Ovary (tissue), 10 donors: ENCODE measurements at regions of chr4 and their contacts with region 1.

Region 1: DNA sequence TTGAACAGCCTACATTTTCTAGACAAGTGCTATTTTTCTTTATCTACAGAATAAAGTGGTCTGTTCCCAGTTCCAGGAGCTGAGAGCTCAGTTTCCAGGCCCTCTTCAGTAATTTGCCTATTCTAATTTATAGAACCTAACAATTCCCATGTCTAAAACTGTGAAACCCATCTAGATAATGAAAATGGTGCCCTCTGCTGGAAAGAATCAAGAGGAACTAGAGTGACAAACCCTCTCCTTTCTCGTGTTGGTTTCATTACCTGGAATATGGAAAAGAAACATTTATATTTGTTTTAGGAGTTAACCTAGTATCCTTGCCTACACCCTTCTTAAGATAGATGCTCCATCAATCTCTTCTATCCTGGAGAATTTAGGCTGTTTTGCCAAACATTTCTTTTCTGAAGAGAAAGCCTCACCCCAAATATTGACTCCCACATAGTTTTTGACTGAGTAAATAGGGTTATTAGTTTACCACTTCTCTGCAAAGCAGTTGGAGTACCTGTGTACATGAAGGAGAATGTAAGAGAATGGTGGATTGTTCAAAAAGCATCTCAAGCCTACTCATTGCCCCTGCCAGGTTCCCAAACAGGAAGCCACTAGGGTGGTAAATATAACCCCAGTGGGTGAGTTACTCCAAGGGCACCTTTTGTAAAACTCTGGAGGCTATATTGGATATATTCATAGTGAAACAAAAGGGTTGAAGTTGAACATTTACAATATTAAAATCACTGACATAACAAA is 121.6 kb downstream of the RASL11B start:
- DNase-seq: no peak
- H3K4me3 ChIP-seq: no peak overlapping the region
- H3K27ac ChIP-seq: peak overlapping the region; percentile 10 to 41
- H3K4me1 ChIP-seq: peaks cover 13% of the 10 kb centered on the region
- H3K27me3 ChIP-seq: no peaks in the 10 kb centered on the region
- CTCF ChIP-seq: peak; percentile 21 to 63 (median 58)
- EP300 ChIP-seq: no peak
- POLR2A ChIP-seq: no peak

Region 2: DNA sequence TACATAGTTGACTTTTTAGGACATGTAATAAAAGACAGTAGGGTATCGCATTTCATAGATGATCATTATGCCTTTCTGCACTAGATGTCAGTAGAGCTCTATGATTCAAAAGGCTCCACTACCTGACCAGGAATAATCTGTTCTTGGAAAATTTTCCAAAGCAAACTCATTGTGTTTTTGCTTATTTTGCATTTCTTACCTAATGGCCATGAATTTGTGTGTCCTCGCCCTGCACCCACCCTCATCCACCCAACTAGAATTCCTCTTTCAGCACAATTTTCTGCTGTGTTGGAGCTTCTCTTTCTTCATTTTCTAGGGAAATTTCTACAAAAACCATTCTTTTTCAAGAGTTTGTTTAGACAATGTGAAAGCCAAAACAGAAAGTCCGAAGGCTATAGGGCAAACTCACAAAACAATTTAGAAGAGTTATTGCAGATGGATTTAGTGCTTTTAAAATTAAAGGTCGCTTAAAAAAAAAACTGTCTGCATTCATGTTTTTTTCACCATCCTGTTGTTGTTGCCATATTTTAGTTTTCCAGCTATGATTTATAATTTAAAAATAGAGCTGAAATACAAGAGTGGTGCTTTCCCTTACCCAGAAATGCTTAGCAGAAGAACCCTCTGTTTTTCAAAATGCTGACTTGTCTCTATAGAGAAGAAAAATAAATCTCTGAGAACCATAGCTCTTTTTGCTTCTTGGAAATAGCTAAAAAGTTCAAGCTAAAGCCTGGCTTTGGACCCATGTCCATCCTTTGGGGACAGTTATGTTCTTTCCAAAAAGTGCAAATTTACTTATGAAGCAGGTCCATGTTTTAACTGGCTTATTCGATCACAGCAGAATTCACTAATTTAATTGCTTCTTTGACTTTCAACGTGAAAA is 748.9 kb before region 1 on chr4:
- intact Hi-C with region 1: loop called in 2 of 4 experiments (anchors 5 to 10 kb)
- DNase-seq: peak; percentile 50 to 71 (median 62)
- H3K4me3 ChIP-seq: peak overlapping the region; percentile 15
- H3K27ac ChIP-seq: peak overlapping the region in 1 of 2 donors; percentile 29
- H3K4me1 ChIP-seq: no peaks in the 10 kb centered on the region
- H3K27me3 ChIP-seq: no peaks in the 10 kb centered on the region
- CTCF ChIP-seq: peak; percentile 32 to 71 (median 71)
- EP300 ChIP-seq: no peak
- POLR2A ChIP-seq: no peak

Region 3: GRCh38 chr4:52376132-52376704 is 607.5 kb before region 1 on chr4:
- intact Hi-C with region 1: loop called in 2 of 4 experiments (anchors 5 to 10 kb)
- DNase-seq: peak in 3 of 5 donors; percentile 17 to 43 (median 32)
- H3K4me3 ChIP-seq: no peak overlapping the region
- H3K27ac ChIP-seq: no peak overlapping the region
- H3K4me1 ChIP-seq: no peaks in the 10 kb centered on the region
- H3K27me3 ChIP-seq: no peaks in the 10 kb centered on the region
- CTCF ChIP-seq: peak; percentile 32 to 67 (median 56)
- EP300 ChIP-seq: no peak
- POLR2A ChIP-seq: no peak

Region 4: DNA sequence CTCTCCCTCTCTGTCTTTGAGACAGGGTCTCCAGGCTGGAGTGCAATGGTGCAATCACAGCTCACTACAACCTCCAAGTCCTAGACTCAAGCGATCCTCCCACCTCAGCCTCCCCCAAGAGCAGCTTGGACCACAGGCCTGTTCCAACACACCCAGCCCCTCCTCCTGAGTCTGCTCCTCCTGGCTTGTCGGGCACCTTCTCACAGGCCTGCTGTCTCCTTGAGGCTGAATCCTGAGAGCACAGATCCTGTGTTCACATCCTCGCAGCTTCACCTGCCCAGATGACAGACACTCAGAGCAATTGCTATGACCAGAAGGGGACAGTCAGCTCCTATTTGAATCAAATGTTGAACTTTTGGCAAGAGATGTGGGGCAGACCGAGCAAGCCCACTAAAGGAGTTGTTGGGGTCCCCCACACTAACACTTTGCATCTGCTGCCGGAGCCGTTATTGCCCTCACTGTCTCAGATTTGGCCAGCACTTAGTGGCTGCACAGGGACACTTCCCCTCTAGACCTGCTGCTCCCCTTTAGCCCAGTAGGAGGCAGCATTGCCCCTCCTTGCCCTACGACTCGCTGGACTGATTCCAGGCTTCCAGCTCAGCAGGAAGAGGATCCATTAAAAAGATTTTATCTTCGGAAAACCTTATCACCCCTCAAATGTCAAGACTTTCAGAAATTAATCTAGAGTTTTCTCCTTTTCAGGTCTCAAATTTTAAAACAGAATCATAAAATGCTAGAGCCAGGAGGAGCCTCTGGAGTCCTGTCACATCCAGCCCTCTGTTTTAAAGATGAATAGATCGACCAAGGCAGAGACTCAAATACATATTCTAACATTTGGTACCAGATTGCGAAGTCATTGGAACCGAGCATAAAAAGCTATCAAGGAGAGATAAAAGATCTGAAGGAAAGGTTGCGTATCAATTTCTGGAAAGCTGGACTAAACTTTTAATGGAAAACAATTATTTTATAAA is 438.3 kb before region 1 on chr4:
- intact Hi-C with region 1: loop called (anchors 2 to 5 kb)
- DNase-seq: peak; percentile 74 to 84 (median 82)
- H3K4me3 ChIP-seq: no peak overlapping the region
- H3K27ac ChIP-seq: no peak overlapping the region
- H3K4me1 ChIP-seq: peaks cover 9% of the 10 kb centered on the region
- H3K27me3 ChIP-seq: no peaks in the 10 kb centered on the region
- CTCF ChIP-seq: peak; percentile 49 to 83 (median 74)
- EP300 ChIP-seq: no peak
- POLR2A ChIP-seq: no peak

Region 5: DNA sequence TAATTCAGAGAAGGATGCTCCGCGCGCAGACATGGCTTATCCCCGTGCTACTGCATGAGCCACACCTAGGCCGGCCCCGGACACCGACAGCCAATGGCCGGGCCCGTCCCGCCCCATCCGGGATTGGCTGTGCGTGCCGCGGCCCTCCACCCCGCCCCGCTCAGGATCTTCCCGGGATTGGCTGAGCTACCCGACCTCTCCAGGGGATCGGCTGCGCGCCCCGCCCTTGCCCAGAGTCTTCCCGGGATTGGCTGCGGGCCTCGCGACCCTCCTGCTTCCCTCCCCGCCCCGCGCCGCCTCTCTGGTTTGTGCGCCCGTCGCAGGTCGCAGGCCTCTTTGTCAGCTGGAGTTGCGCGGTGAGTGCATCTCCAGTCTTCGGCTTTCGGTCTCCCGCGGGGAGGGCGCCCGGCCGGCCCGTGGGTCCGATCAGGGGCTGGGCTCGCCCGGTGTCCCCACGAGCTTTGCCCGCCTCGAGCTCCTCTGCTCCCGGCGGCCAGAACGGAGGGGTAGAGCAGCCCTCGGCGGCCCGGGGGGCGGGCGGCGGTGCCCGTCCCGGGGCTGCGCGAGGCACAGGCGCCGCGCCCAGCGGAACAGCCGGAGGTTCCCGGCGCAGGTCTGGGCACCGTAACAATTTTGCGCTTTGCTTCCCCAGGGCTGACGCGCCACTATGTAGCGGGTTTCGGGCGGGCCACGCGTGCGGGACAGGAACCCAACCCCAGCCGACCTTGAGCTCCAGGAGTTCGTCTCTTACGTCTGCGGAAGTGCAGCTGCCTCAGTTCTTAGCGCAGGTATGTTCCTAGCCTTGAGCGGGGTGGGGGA is 271.4 kb before region 1 on chr4:
- intact Hi-C with region 1: loop called in 1 of 4 experiments (anchors 10 kb)
- DNase-seq: peak; percentile 98 to 99 (median 98)
- H3K4me3 ChIP-seq: peak overlapping the region; percentile 95
- H3K27ac ChIP-seq: peak overlapping the region; percentile 82 to 91
- H3K4me1 ChIP-seq: peaks cover 11% of the 10 kb centered on the region
- H3K27me3 ChIP-seq: no peaks in the 10 kb centered on the region
- CTCF ChIP-seq: no peak
- EP300 ChIP-seq: no peak
- POLR2A ChIP-seq: peak; percentile 84

Region 6: DNA sequence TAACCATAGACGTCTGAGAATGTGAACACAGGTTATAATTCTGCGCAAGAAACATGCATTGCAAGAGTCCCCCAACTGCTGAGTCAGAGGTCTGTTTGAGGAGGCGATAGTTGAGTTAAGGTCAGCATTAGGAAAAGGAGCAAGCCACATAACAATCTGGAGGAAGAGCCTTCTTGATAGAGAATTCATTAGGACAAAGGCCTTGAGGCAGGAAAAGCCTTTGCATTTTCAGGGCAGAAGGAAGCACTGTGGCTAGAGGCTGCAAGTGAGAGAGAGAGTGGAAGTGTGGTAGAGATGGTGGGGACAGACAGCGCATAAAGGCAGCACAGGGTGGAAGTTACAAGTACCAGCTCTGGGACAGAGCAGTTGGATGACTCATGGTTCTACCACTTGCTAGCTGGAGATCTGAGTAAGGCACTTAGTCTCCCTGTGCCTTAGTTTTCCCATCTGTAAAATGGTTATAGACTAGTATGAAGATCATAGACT is 733.4 kb after region 1 on chr4:
- intact Hi-C with region 1: no loop called
- DNase-seq: no peak
- H3K4me3 ChIP-seq: no peak overlapping the region
- H3K27ac ChIP-seq: no peak overlapping the region
- H3K4me1 ChIP-seq: peaks cover 5% of the 10 kb centered on the region
- H3K27me3 ChIP-seq: no peaks in the 10 kb centered on the region
- CTCF ChIP-seq: no peak
- EP300 ChIP-seq: no peak
- POLR2A ChIP-seq: no peak